ENCODE measurements at regions of chr19 and their contacts with region 1.

Region 1: DNA sequence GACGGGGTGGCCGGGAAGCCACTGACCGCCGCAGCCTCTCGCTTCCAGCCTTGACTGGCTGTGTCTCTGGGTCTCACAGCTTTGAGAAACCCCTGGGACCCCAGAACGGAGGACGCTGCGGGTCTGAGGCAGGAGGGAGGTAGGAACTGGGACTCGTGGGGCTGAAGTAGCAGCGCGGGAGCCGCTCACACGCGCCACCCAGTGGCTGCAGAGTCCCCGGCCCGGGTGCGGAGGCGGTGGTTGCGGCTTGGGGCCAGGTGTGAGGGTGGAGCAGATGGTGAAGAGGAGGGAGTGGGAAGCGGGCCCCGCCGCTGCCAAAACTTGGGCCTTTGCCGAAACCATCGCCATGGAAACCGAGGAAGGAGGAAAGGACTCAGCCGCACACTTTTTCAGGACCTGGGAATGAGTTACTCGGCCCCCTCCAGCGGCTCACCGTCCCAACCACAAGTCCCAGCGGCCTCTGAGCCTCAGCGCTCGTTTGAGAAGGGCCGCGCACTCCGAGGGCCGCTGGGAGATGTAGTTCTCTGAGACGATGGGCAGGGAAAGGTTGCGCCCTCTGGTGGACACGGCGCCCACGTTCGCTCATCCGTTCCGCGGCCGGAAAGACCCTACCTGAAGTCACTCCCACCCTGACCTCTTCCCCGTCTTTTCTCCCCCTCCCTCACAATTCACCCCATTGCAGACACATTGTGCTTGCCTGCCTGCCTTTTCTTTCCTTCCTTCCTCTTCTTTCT is 2.2 kb upstream of the SLC17A7 start:
- DNase-seq: peak; percentile 87
- H3K4me3 ChIP-seq: peak overlapping the region; percentile 68
- H3K27ac ChIP-seq: no peak overlapping the region
- H3K27me3 ChIP-seq: peaks cover 38% of the 10 kb centered on the region
- CTCF ChIP-seq: peak; percentile 84

Region 2: DNA sequence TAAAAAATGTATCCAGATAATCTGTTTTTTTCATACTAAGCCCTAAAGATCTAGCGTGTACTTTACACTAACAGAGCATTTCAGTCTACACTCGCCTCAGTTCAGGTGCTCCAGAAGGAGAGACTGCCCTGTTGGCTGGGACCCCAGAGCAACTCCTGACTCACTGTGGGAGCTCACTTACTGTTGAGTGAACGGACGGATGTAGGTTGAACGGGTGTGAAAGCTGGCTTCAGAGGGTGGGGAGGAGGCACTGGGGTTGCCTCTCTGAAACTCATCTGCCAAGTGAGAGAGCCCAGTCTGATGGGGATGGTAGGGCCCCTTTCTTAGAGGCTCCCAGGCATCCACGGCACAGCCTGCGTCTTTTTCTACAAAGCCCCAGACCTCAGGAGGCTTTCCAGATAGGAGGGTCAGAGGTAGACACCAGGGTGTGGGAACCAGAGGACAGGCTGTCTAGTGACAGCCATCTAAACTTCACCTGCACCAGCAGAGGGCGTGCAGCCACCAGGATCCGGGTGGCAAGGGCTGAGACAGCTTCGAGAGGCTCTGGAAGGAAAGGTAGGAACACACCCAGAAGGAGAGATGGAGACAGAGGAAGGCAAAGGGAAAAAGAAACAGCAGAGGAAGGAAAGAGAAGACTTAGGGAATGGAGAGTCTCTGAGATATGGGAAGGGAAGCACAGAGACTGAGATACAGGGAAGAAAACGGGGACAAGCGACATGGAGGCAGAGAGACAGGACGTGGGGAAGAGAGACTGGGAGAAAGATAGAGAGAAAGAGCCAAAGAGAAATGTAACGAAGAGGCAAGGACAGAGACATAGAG is 51.7 kb before region 1 on chr19:
- CTCF ChIA-PET with region 1: interaction called, 15 read pairs
- POLR2A ChIA-PET with region 1: no interaction called
- DNase-seq: peak; percentile 20
- H3K4me3 ChIP-seq: no peak overlapping the region
- H3K27ac ChIP-seq: no peak overlapping the region
- H3K27me3 ChIP-seq: peaks cover 26% of the 10 kb centered on the region
- CTCF ChIP-seq: peak; percentile 75